K562 (cell line): ENCODE measurements at regions of chr2 and their contacts with region 1.

Region 1: DNA sequence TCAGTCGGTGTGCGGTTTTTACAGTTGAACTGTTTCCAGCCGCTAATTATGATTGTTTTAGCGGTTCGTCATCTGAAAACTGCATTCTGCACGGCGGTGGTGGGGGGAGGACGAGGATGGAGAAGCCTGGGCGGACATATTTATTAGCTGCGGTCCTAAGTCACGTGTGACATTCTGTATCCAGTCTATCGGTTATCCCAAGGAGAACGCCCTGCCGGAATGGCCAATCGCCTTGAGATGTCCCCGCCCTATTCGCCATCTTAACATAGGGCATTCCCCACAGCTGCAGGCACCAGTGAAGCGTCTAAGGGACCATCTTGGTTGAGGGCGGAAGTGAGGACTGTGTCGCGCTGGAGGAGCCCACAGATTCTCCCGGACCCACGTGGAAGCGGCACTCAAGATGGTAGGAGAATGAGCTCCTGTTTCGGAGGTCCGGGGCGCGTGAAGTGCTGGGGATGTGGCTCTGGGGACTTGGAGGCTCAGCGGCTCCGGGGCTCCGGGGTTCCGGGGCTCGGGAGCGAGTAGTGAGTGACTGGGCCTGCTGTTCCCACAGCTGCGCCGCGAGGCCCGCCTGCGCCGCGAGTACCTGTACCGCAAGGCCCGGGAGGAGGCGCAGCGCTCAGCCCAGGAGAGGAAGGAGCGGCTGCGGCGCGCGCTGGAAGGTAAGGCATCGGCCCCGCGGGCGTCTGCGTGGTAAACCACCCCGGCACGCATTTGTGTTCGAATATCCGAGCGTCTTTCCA is at the start of gene IMP4:
- DNase-seq: peak; percentile 82 to 99 (median 88)
- ATAC-seq: peak; percentile 88
- H3K4me3 ChIP-seq: peak within 1 kb of the TSS; percentile 59
- H3K27ac ChIP-seq: peak within 1 kb of the TSS; percentile 78
- H3K4me1 ChIP-seq: peaks cover 33 to 52% of the 10 kb centered on the region in 2 experiments
- H3K27me3 ChIP-seq: no peaks in the 10 kb centered on the region
- CTCF ChIP-seq: peak; percentile 46 to 57 (median 54)
- EP300 ChIP-seq: no peak; the same call in 1 of the 2 replicates
- POLR2A ChIP-seq: peak; percentile 79
- RAD21 ChIP-seq: peak; percentile 43 to 47; a peak in 3 of 4 replicates
- polyA plus RNA-seq, gene IMP4: 35.4 to 53.3 TPM

Region 2: DNA sequence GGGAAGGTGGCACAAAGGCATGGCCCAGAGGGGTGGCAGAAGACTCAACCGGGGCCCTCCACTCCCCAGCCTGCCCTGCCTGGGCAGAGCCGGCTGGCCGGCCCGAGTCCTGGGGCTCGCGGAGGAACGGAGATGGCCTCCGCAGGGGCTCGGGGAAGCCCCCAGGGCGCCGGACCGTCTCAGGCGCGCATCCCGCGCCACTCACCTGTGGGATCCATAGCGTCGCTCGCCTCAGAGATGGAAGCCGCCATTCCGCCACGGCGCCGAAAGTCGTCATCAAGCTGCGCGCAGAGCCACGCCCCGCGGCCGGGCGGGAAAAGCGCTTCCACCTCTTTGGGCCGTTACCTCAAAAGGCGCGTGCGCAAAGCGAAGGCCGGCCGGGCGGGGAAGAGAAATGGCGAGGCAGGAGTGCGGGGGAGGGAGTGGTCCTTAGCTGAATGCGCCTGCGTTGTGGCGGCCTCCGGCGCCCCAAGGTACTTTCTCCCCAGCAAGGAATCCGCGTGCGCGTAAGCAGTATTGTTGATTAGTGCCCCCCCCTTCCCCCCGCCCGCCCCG is 161.3 kb before region 1 on chr2 and contains the start of gene SMPD4:
- CTCF ChIA-PET with region 1: no interaction called
- POLR2A ChIA-PET with region 1: interaction called, 8 read pairs
- in situ Hi-C with region 1: loop called (anchors 5 kb)
- intact Hi-C with region 1: loop called (anchors 5 kb)
- DNase-seq: peak; percentile 73 to 97 (median 83)
- ATAC-seq: peak; percentile 77
- H3K4me3 ChIP-seq: peak within 1 kb of the TSS; percentile 100
- H3K27ac ChIP-seq: peak within 1 kb of the TSS; percentile 97
- H3K4me1 ChIP-seq: peaks cover 7 to 45% of the 10 kb centered on the region in 2 experiments; a peak in 4 of 5 replicates
- H3K27me3 ChIP-seq: no peaks in the 10 kb centered on the region
- CTCF ChIP-seq: 0 out of 6 replicates have a peak, but pooled peaks of 1 of the 3 experiments have one; percentile 10
- EP300 ChIP-seq: no peak
- POLR2A ChIP-seq: peak; percentile 73
- RAD21 ChIP-seq: no peak
- polyA plus RNA-seq, gene SMPD4: 7.5 to 8.8 TPM

Region 3: GRCh38 chr2:130355578-130356431 is 13.1 kb after region 1 on chr2 and contains the start of gene PTPN18:
- CTCF ChIA-PET with region 1: no interaction called
- POLR2A ChIA-PET with region 1: interaction called, 63 read pairs
- in situ Hi-C with region 1: no loop called
- intact Hi-C with region 1: no loop called
- DNase-seq: peak; percentile 93 to 95 (median 95)
- ATAC-seq: peak; percentile 96
- H3K4me3 ChIP-seq: peak within 1 kb of the TSS; percentile 78
- H3K27ac ChIP-seq: peak within 1 kb of the TSS; percentile 85
- H3K4me1 ChIP-seq: peaks cover 5 to 41% of the 10 kb centered on the region in 2 experiments; a peak in 4 of 5 replicates
- H3K27me3 ChIP-seq: no peaks in the 10 kb centered on the region
- CTCF ChIP-seq: peak; percentile 31 to 73 (median 63); a peak in 5 of 6 replicates
- EP300 ChIP-seq: no peak
- POLR2A ChIP-seq: peak; percentile 76
- RAD21 ChIP-seq: peak; percentile 61 to 73
- polyA plus RNA-seq, gene PTPN18: 11.6 to 19.3 TPM

Region 4: DNA sequence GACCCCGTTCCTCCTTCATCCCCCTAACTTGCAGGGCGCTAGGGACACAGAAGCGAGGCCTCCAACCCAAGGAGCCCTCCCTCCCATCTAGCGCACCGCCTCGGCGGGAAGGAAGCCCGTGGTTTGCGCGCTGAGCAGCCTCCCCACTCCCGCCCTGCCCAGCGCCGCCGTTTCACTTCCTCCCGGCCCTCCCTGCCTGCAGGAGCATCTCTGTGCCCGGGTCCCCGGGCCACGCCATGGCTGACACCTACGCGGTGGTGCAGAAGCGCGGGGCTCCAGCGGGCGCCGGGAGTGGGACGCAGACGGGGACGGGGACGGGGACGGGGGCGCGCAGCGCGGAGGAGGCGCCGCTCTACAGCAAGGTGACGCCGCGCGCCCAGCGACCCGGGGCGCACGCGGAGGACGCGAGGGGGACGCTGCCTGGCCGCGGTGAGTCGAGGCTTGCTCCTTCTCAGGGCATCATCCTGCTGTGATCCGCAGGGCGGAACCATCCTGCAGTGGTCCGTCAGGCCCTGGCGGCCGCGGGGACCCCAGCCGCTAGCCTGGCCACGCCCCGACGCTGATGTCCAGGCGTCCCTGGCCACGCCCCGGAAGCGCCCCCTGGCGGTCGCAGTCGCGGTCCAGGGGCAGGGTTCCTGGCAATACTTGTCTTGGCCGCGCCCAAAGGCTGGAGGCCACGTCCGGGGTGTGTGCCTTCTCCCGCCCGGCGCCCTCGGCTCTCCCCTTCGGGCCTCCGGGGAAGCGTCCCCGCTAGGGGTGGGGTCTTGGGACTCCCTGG is 29.5 kb after region 1 on chr2:
- CTCF ChIA-PET with region 1: no interaction called
- POLR2A ChIA-PET with region 1: interaction called, 6 read pairs
- in situ Hi-C with region 1: no loop called
- intact Hi-C with region 1: loop called (anchors 1 kb)
- DNase-seq: peak; percentile 92 to 95 (median 92)
- ATAC-seq: peak; percentile 95
- H3K4me3 ChIP-seq: peak overlapping the region; percentile 74
- H3K27ac ChIP-seq: peak overlapping the region; percentile 81
- H3K4me1 ChIP-seq: peaks cover 35 to 42% of the 10 kb centered on the region in 2 experiments; a peak in 4 of 5 replicates
- H3K27me3 ChIP-seq: no peaks in the 10 kb centered on the region
- CTCF ChIP-seq: peak; percentile 86 to 92 (median 87)
- EP300 ChIP-seq: peak; percentile 6; the same call in 1 of the 2 replicates
- POLR2A ChIP-seq: peak; percentile 77
- RAD21 ChIP-seq: peak; percentile 43 to 61

Region 5: DNA sequence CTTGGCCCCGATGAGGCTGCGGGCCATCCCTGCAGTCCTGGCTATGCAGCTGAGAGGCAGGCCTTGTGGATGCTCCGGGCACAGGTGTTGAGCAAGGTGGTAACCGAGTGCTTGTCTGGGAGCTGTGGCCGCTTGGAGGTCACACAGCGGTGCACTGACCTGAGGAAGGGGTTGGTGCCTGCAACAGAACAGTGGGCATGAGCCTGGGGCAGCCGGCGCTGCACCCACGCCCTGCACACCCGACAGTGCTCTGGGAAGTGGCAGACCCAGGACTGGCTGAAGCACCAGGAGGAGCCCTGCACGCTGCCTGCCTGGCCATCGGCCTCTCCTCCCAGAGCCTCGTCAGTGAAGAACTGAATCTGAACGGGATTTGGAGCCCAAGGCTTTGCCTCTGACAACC is 858.4 kb after region 1 on chr2:
- CTCF ChIA-PET with region 1: no interaction called
- POLR2A ChIA-PET with region 1: no interaction called
- in situ Hi-C with region 1: no loop called
- intact Hi-C with region 1: loop called (anchors 5 kb)
- DNase-seq: no peak
- ATAC-seq: no peak
- H3K4me3 ChIP-seq: no peak overlapping the region
- H3K27ac ChIP-seq: no peak overlapping the region
- H3K4me1 ChIP-seq: no peaks in the 10 kb centered on the region; a peak in 1 of 5 replicates
- H3K27me3 ChIP-seq: peaks cover 0 to 12% of the 10 kb centered on the region in 2 experiments; a peak in 2 of 5 replicates
- CTCF ChIP-seq: no peak
- EP300 ChIP-seq: no peak
- POLR2A ChIP-seq: no peak
- RAD21 ChIP-seq: no peak

Region 6: DNA sequence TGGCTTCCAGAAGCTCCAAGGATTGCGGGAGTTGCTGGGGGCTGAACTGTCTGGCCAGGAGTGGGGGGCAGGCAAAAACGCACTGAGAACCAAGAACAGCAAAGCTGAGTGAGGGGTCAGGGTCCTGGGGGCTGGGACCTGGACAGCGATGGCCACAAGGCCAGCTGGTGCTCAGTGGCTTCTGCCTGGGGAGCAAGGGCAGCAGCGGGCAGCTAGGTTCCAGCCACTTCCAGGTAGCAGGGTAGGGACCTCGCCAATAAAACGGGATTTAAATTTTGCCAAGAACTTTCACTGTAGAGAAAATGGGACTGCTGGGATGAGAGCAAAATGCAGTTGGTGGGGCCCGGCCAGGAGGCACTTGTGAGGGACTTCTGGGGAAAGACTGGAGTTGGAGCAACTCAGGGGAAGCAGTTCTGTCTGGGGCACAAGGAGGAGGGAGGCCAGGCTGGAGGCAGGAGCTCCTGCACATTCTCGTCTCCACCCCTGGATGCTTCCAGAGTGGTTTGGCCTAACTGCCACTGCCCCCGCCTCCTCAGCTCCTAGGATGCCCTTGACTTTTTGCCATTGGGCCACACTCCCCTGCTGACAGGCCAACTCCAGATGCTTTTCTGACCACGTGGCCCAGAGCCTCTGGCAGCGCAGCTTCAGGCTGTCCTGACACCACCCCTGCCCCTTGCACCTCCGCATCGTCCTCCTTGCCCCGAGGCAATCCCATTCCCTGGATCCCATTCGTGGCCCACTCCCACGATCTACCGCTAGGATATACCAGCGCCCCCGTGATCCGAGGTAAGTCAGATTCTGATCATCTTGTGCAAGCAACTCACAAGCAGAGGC is 1179.5 kb after region 1 on chr2:
- CTCF ChIA-PET with region 1: no interaction called
- POLR2A ChIA-PET with region 1: no interaction called
- in situ Hi-C with region 1: loop called (anchors 25 kb)
- intact Hi-C with region 1: no loop called
- DNase-seq: peak in 2 of 4 experiments; percentile 5 to 12
- ATAC-seq: peak; percentile 38
- H3K4me3 ChIP-seq: no peak overlapping the region
- H3K27ac ChIP-seq: no peak overlapping the region
- H3K4me1 ChIP-seq: peaks cover 0 to 6% of the 10 kb centered on the region in 2 experiments; a peak in 2 of 5 replicates
- H3K27me3 ChIP-seq: no peaks in the 10 kb centered on the region
- CTCF ChIP-seq: no peak
- EP300 ChIP-seq: no peak
- POLR2A ChIP-seq: peak; percentile 55; the same call in 1 of the 2 replicates
- RAD21 ChIP-seq: no peak